ENCODE measurements at regions of chr6 and their contacts with region 1.

Region 1: GRCh38 chr6:116561377-116562018 is 7.9 kb downstream of the CALHM4 start:
- DNase-seq: peak; percentile 78
- H3K4me3 ChIP-seq: no peak overlapping the region
- H3K27ac ChIP-seq: no peak overlapping the region
- H3K4me1 ChIP-seq: peaks cover 4% of the 10 kb centered on the region
- H3K27me3 ChIP-seq: no peaks in the 10 kb centered on the region
- CTCF ChIP-seq: peak; percentile 94

Region 2: DNA sequence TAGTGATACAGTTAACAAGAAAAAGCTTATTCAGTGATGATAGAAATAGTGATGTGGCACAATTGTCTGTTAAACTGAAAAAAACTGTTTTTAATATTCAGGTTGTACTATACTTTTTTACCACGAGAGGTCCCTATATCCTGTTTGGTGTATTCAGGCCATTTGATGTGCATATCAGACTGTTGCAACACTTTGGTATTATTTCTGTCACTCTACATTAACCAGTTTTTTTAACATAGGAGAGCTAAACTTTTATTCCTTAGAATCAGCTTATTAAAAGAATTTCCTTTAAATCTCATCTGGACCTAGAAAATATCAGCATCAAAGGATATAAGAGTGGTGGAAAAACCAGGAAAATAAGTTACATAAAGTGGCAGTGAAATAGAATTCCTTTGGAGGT is 344.4 kb before region 1 on chr6:
- CTCF ChIA-PET with region 1: no interaction called
- POLR2A ChIA-PET with region 1: no interaction called
- intact Hi-C with region 1: loop called (anchors 5 kb)
- DNase-seq: peak; percentile 64
- H3K4me3 ChIP-seq: no peak overlapping the region
- H3K27ac ChIP-seq: peak overlapping the region; percentile 37
- H3K4me1 ChIP-seq: peaks cover 16% of the 10 kb centered on the region
- H3K27me3 ChIP-seq: no peaks in the 10 kb centered on the region
- CTCF ChIP-seq: peak; percentile 73

Region 3: GRCh38 chr6:116268589-116269293 is 292.8 kb before region 1 on chr6:
- CTCF ChIA-PET with region 1: interaction called, 14 read pairs
- POLR2A ChIA-PET with region 1: no interaction called
- intact Hi-C with region 1: loop called (anchors 2 kb)
- DNase-seq: peak; percentile 91
- H3K4me3 ChIP-seq: no peak overlapping the region
- H3K27ac ChIP-seq: no peak overlapping the region
- H3K4me1 ChIP-seq: peaks cover 11% of the 10 kb centered on the region
- H3K27me3 ChIP-seq: no peaks in the 10 kb centered on the region
- CTCF ChIP-seq: peak; percentile 92

Region 4: DNA sequence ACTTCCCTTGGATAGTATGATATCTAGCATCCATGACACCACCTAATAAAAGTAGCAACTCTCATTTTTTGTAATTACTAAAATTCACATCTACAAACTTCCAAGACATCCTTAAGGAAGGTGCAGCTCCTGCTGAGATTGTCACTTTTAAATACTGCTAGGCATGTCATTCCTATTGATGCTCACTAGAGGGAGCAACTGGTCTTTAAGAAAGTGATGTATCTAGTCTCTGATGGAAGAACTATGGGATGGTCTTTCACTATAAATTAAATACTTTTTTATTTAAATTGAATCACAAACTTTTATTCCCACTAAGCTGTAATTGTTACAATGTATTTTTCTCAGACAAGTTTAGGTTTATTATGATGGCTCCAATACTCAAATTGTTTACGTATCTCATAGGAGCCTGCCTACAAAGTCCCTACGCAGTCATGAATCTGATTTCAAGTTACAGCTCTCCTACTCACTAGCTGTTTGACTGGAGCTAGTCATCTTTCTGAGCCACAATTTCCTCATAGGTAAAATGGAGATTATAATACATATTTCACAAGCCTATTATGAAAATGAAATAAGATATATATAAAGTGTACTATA is 273.7 kb before region 1 on chr6:
- CTCF ChIA-PET with region 1: interaction called, 11 read pairs
- POLR2A ChIA-PET with region 1: no interaction called
- intact Hi-C with region 1: loop called (anchors 1 kb)
- DNase-seq: peak; percentile 58
- H3K4me3 ChIP-seq: no peak overlapping the region
- H3K27ac ChIP-seq: no peak overlapping the region
- H3K4me1 ChIP-seq: no peaks in the 10 kb centered on the region
- H3K27me3 ChIP-seq: no peaks in the 10 kb centered on the region
- CTCF ChIP-seq: peak; percentile 90

Region 5: GRCh38 chr6:116531675-116532570 is 29.6 kb before region 1 on chr6:
- CTCF ChIA-PET with region 1: no interaction called
- POLR2A ChIA-PET with region 1: no interaction called
- intact Hi-C with region 1: loop called (anchors 2 kb)
- DNase-seq: peak; percentile 75
- H3K4me3 ChIP-seq: no peak overlapping the region
- H3K27ac ChIP-seq: no peak overlapping the region
- H3K4me1 ChIP-seq: peaks cover 3% of the 10 kb centered on the region
- H3K27me3 ChIP-seq: no peaks in the 10 kb centered on the region
- CTCF ChIP-seq: peak; percentile 81

Measured in A673 (cell line).